Right cardiac atrium (tissue), 5 donors: ENCODE measurements at regions of chr2 and their contacts with region 1.

Region 1: GRCh38 chr2:171433763-171434670 is at the starts of genes DCAF17 and METTL8:
- DNase-seq: peak; percentile 97 to 98 (median 98)
- ATAC-seq: peak; percentile 99
- H3K4me3 ChIP-seq: peak within 1 kb of the TSS; percentile 90
- H3K27ac ChIP-seq: peak within 1 kb of the TSS; percentile 88
- H3K4me1 ChIP-seq: peaks cover 4% of the 10 kb centered on the region
- H3K27me3 ChIP-seq: no peaks in the 10 kb centered on the region
- total RNA-seq, gene DCAF17: 6.5 to 12.1 (median 9.7) TPM
- total RNA-seq, gene METTL8: 12.2 to 16.4 (median 13.6) TPM

Region 2: GRCh38 chr2:171281110-171281509 is 152.9 kb before region 1 on chr2:
- intact Hi-C with region 1: no loop called
- DNase-seq: no peak
- ATAC-seq: no peak
- H3K4me3 ChIP-seq: no peak overlapping the region
- H3K27ac ChIP-seq: no peak overlapping the region
- H3K4me1 ChIP-seq: no peaks in the 10 kb centered on the region
- H3K27me3 ChIP-seq: no peaks in the 10 kb centered on the region

Region 3: DNA sequence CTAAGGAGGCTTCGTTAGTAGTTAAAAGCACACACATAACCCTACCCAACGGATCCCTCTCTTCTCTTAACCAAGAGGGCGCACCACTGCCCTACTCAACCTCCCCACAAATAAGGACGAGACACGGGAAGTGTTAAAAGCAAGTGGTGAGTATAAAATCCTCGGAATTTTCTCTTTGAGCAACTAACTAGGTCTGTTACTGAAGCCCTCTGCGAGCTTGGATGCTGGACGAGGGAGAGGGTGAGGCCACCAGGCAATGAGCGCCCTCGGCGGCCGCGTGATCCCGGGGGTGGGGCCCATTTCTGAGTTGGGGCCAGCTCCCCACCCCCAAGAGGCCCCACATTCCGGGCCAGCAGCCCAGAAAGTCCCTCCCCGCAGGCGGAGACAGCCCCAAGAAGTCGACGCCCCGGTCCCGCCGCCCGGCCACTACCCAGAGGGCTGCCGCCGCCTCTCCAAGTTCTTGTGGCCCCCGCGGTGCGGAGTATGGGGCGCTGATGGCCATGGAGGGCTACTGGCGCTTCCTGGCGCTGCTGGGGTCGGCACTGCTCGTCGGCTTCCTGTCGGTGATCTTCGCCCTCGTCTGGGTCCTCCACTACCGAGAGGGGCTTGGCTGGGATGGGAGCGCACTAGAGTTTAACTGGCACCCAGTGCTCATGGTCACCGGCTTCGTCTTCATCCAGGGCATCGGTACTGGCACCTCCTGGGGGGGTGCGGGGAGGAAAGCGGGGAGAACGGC is 88.2 kb after region 1 on chr2 and contains the start of gene CYBRD1:
- intact Hi-C with region 1: loop called in 1 of 4 experiments (anchors 10 kb)
- DNase-seq: peak; percentile 91 to 97 (median 96)
- ATAC-seq: peak; percentile 92 to 93
- H3K4me3 ChIP-seq: peak within 1 kb of the TSS; percentile 69
- H3K27ac ChIP-seq: peak within 1 kb of the TSS; percentile 92
- H3K4me1 ChIP-seq: peaks cover 2% of the 10 kb centered on the region
- H3K27me3 ChIP-seq: no peaks in the 10 kb centered on the region
- total RNA-seq, gene CYBRD1: 90.8 to 138 (median 119) TPM